Gastrocnemius medialis (tissue), 4 donors: ENCODE measurements at regions of chr3 and their contacts with region 1.

Region 1: GRCh38 chr3:162777111-162777510 is 1280.5 kb downstream of the OTOL1 start:
- DNase-seq: no peak
- ATAC-seq: no peak
- H3K4me3 ChIP-seq: no peak overlapping the region
- H3K27ac ChIP-seq: no peak overlapping the region
- H3K4me1 ChIP-seq: no peaks in the 10 kb centered on the region
- H3K27me3 ChIP-seq: no peaks in the 10 kb centered on the region
- CTCF ChIP-seq: no peak
- POLR2A ChIP-seq: no peak

Region 2: DNA sequence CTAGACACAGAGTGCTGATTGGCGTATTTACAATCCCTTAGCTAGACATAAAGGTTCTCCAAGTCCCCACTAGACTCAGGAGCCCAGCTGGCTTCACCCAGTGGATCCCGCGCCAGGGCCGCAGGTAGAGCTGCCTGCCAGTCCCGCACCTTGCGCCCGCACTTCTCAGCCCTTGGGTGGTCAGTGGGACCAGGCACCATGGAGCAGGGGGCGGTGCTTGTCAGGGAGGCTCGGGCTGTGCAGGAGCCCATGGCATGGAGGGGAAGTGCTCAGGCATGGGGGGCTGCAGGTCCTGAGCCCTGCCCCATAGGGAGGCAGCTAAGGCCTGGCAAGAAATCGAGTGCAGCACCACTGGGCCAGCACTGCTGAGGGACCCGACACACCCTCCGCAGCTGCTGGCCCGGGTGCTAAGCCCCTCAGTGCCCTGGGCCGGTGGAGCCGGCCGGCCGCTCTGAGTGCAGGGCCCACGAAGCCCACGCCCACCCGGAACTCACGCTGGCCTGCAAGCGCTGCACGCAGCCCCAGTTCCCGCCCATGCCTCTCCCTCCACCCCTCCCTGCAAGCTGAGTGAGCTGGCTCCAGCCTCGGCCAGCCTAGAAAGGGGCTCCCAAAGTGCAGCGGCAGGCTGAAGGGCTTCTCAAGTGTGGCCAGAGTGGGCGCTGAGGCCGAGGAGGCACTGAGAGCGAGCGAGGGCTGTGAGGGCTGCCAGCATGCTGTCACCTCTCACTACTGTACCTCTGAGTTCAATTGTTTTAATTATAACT is 66.6 kb before region 1 on chr3:
- in situ Hi-C with region 1: no loop called
- intact Hi-C with region 1: no loop called
- DNase-seq: no peak
- ATAC-seq: no peak
- H3K4me3 ChIP-seq: no peak overlapping the region
- H3K27ac ChIP-seq: no peak overlapping the region
- H3K4me1 ChIP-seq: no peaks in the 10 kb centered on the region
- H3K27me3 ChIP-seq: no peaks in the 10 kb centered on the region
- CTCF ChIP-seq: no peak
- POLR2A ChIP-seq: no peak

Region 3: DNA sequence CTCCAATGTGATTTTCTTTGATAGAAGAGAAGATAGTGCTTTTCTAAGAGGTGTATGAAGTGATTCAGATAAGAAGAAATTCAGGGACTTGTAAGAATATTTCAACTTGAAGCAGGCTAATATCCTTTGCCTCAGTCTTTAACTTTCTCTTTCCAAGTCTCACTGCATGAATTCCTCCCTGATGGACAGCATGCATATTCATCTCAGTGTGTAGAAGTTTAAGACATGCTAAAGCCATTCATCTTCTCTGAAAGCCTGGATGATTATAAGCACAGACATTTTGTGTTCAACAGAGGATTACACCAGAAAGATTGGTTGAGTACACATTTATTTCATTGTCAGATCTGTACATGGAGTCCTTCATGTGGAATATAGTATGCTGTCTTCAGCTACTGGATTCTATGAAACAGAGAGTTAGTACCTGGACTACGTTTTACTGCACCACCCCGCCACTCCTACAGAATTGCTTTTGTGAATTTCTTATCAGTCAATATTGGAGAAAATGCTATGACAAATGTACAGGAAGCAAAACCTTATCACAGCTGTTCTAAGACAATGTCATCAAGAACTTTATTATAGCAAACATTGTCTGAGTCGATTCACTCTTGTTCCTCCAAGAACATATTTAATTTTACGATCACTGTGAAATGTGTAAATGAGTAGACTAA is 65.6 kb after region 1 on chr3:
- in situ Hi-C with region 1: loop called in 1 of 4 experiments (anchors 10 kb)
- intact Hi-C with region 1: no loop called
- DNase-seq: no peak
- ATAC-seq: no peak
- H3K4me3 ChIP-seq: no peak overlapping the region
- H3K27ac ChIP-seq: no peak overlapping the region
- H3K4me1 ChIP-seq: no peaks in the 10 kb centered on the region
- H3K27me3 ChIP-seq: no peaks in the 10 kb centered on the region
- CTCF ChIP-seq: no peak
- POLR2A ChIP-seq: no peak

Region 4: DNA sequence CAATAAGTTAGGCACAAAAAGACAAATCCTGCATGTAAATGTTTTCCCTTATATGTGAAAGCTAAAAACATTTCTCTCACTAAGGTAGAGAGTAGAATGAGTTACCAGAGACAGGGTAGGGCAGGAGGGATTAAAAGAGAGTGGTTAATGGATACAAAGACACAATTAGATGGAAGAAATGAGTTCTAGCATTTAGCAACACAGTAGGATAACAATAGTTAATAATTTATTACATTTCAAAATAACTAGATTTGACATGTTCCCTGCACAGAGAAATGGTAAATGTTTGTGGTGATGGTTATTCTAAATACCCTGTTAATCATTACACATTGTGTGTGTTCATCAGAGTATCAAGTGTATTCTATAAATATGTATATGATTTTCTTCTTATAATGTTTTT is 120.2 kb after region 1 on chr3:
- in situ Hi-C with region 1: loop called in 1 of 4 experiments (anchors 25 kb)
- intact Hi-C with region 1: no loop called
- DNase-seq: no peak
- ATAC-seq: no peak
- H3K4me3 ChIP-seq: no peak overlapping the region
- H3K27ac ChIP-seq: no peak overlapping the region
- H3K4me1 ChIP-seq: no peaks in the 10 kb centered on the region
- H3K27me3 ChIP-seq: no peaks in the 10 kb centered on the region
- CTCF ChIP-seq: no peak
- POLR2A ChIP-seq: no peak